H1 (cell line): ENCODE measurements at regions of chr5 and their contacts with region 1.

Region 1: DNA sequence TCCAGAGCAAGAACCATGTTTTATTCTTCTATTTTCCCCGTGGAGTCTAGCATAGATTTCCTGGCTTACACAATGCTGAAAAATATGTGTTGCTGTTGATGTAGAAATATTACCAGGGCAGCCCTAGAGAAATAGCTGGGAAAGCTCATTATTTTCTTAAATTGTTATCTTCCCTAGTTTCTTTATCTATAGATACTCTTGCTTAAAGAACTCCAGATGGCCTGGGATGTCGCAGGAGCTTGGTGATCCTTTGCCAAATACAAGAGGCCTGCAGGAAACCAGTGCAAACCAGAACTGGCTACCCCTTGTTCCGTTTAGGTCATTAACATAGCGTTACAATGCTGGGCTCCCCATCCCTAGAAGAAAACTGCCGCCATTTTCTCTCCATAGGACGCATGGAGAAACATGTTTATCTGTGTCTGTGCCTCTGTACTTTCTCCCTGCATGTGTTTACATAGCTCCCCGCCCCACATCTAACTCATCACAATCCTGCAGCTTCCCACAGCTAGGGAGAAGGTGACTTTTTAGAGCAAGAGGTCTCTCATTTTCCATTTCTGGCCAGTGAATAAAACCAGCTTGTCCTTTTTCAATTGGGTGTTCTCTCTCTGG is 6.4 kb downstream of the PRLR start:
- DNase-seq: no peak
- H3K4me3 ChIP-seq: no peak overlapping the region
- H3K27ac ChIP-seq: no peak overlapping the region
- H3K4me1 ChIP-seq: no peaks in the 10 kb centered on the region; a peak in 1 of 7 replicates
- H3K27me3 ChIP-seq: no peaks in the 10 kb centered on the region
- CTCF ChIP-seq: no peak
- EP300 ChIP-seq: no peak
- POLR2A ChIP-seq: no peak
- RAD21 ChIP-seq: no peak

Region 2: DNA sequence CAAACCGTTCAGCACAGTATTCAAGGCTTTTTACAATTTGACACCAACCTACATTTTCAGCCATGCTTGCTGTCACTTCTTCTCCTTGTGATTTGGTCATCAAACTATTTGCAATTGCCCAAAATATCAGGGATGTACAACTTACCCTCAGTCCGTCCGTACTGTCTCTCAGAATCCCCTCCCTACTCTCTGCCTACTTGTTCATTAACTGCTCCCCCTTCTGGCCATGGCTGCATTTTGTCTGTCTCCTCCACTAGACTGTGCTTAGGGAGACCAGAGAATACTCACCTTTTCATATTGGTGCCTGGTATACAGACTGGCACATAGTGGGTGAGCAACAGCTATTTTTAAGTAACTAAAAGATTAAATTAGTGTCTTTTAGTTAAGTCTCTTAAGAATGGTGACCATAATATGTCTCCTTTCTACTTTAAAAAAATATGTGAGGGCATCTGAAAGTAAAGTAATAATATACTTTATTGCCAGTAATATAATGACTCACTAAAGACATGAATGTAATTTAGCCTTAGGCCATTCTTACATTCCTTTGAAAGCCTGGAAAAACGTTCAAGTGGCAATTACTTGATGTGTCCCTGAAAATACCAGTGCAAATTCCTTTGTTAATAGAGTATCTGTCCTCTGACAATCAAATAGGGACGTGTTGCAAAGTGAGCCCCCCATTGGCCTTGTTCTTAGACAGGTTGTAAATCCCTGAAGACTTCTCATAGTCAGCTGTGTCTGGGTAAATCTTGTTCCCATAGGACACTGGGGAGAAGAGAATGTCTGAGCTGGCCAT is 21.4 kb before region 1 on chr5:
- CTCF ChIA-PET with region 1: interaction called, 18 read pairs
- POLR2A ChIA-PET with region 1: no interaction called
- DNase-seq: peak; percentile 25 to 78
- H3K4me3 ChIP-seq: no peak overlapping the region
- H3K27ac ChIP-seq: no peak overlapping the region
- H3K4me1 ChIP-seq: no peaks in the 10 kb centered on the region
- H3K27me3 ChIP-seq: no peaks in the 10 kb centered on the region
- CTCF ChIP-seq: peak; percentile 38 to 83 (median 63)
- EP300 ChIP-seq: no peak
- POLR2A ChIP-seq: no peak
- RAD21 ChIP-seq: peak; percentile 66 to 68

Region 3: GRCh38 chr5:35212122-35212982 is 11.5 kb before region 1 on chr5:
- CTCF ChIA-PET with region 1: interaction called, 12 read pairs
- POLR2A ChIA-PET with region 1: interaction called, 3 read pairs
- DNase-seq: no peak
- H3K4me3 ChIP-seq: no peak overlapping the region
- H3K27ac ChIP-seq: no peak overlapping the region
- H3K4me1 ChIP-seq: no peaks in the 10 kb centered on the region
- H3K27me3 ChIP-seq: no peaks in the 10 kb centered on the region
- CTCF ChIP-seq: no peak
- EP300 ChIP-seq: no peak
- POLR2A ChIP-seq: no peak
- RAD21 ChIP-seq: no peak

Region 4: DNA sequence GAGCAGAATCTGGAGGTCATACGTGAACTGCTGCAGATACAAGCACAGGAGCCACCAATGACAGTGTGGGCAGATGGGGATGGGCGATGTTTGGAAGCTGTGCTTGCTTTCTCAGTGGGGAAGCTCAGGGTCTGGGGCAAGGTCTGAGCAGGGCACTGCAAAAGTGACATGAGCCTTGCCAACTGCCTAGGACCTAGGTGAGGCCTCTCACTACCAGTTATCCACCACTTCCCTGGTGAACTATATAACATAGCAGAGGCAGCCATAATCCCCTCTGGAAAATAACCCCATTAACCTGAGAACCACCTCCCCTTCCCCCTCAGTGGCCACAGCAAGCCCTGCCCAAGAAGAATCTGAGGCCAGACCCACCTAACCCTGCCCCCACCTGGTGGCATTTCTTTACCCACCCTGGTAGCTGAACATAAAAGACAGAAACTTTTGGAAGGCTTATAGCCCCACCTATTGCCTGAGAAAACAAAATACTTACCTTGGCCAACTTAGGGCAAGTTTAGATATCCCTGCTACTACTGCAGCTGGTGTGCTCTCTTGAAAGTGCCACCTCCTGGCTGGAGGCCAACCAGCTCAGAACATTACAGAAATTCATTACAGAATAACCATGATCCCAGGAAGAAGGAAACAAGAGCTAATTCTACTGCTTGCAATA is 374.9 kb after region 1 on chr5:
- CTCF ChIA-PET with region 1: interaction called, 13 read pairs
- POLR2A ChIA-PET with region 1: no interaction called
- DNase-seq: peak; percentile 46 to 59
- H3K4me3 ChIP-seq: no peak overlapping the region
- H3K27ac ChIP-seq: no peak overlapping the region
- H3K4me1 ChIP-seq: no peaks in the 10 kb centered on the region
- H3K27me3 ChIP-seq: no peaks in the 10 kb centered on the region
- CTCF ChIP-seq: peak in 2 of 3 experiments; percentile 67 to 92; a peak in 3 of 4 replicates
- EP300 ChIP-seq: no peak
- POLR2A ChIP-seq: no peak
- RAD21 ChIP-seq: peak; percentile 88 to 89